ENCODE measurements at regions of chr17 and their contacts with region 1.

Region 1: DNA sequence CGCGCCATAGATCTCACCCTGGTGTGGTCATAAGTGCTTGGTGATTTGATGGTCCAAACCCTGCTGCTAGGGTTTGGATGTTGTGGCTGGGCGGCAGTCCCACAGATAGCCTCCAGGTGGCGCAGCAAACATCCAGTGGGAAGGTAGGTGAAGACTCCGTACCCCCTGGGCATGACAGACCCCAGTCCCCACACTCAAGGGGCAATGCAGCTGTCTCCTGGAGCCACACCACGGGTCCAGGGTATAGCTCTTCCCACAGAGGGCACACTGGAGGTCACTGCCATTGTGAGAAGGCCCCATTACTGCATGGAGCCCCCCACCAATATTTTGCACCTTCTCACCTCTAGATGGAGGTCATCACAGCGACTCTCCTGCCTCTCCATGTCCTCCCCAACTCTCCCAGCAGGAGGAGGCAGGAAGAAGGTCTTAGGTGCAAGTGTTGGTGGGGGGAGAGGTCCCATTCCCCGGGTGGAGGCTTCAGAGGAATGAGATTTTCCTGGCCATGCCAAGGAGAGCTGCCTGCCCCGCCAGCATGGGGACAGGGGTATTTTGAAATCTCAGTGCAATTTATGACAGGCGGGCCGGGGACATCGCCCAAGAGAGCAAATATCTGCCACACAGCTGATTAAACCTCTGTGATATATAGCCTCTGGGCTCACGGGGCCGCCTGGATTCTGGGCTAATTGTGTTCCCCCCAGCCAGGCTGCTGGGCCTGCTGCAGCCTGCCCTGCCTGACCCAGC is 17.1 kb upstream of the C17orf113 start:
- DNase-seq: peak; percentile 80

Region 2: GRCh38 chr17:42101513-42102319 is 34.2 kb after region 1 on chr17:
- CTCF ChIA-PET with region 1: interaction called, 11 read pairs
- POLR2A ChIA-PET with region 1: interaction called, 5 read pairs
- DNase-seq: peak; percentile 87

Measured in HEK293T (cell line).